Tibial artery (tissue), 4 donors: ENCODE measurements at regions of chr19 and their contacts with region 1.

Region 1: GRCh38 chr19:46821498-46822409 is 28.9 kb downstream of the AP2S1 start:
- DNase-seq: no peak
- H3K4me3 ChIP-seq: no peak overlapping the region
- H3K27ac ChIP-seq: no peak overlapping the region
- H3K4me1 ChIP-seq: no peaks in the 10 kb centered on the region
- H3K27me3 ChIP-seq: no peaks in the 10 kb centered on the region
- CTCF ChIP-seq: no peak

Region 2: GRCh38 chr19:46784262-46785053 is 37.3 kb before region 1 on chr19:
- intact Hi-C with region 1: loop called (anchors 5 kb)
- DNase-seq: peak; percentile 73 to 75
- H3K4me3 ChIP-seq: peak overlapping the region; percentile 92 to 95
- H3K27ac ChIP-seq: peak overlapping the region; percentile 25 to 97
- H3K4me1 ChIP-seq: peaks cover 0 to 45% (median 32%) of the 10 kb centered on the region in 4 donors
- H3K27me3 ChIP-seq: no peaks in the 10 kb centered on the region
- CTCF ChIP-seq: no peak